ENCODE measurements at regions of chr14 and their contacts with region 1.

Region 1: GRCh38 chr14:104677512-104678332 is 11.7 kb upstream of the INF2 start:
- DNase-seq: peak; percentile 57
- H3K4me3 ChIP-seq: peak overlapping the region; percentile 52
- H3K27ac ChIP-seq: no peak overlapping the region
- H3K4me1 ChIP-seq: peaks cover 42% of the 10 kb centered on the region
- CTCF ChIP-seq: no peak

Region 2: DNA sequence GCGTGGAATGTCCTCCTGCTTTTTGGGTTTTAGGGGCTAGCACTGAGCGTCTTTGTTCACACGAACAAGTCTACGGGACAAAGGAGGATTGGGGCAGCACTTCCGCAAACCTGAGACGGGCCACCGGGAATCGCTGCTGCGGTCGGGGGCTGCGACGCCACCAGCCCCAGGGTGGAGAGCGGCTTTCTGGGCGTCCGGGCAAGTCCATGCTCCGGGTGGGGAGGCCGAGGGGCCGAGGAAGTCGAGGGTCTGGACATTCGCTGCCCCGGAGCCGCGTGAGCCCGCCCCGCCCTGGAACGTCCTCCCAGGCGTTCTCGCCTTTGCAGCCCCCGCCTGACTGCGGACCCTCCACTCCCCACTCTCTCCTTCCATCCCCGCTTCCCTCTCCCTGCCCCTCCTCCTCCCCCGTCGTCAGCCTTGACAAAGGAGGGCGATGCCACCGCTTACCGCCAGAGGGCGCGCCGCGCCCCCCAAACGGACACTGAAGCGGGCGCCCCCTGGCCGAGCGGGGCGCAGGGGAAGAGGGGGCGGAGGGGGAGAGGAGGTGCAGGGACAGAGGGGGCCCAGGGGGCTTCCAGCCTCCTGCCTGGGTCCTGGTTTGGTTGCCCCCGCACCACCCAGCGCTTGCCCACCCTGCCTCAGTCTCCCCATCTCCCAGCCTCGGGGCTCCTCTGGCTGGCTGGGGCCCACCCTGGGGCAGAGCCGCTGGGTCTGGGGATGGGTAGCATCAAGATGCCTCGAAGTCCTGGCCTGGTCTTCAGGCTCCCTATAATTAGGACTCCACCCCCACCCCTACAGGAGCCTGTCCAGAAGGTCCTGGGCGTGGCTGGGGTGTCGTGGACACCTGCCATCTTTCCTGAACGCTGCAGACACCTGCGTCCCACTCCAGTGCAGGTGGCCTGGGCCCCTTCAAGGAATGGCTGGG is 27.4 kb before region 1 on chr14:
- CTCF ChIA-PET with region 1: interaction called, 6 read pairs
- POLR2A ChIA-PET with region 1: interaction called, 11 read pairs
- intact Hi-C with region 1: loop called (anchors 1 kb)
- DNase-seq: peak; percentile 77
- H3K4me3 ChIP-seq: peak overlapping the region; percentile 65
- H3K27ac ChIP-seq: no peak overlapping the region
- H3K4me1 ChIP-seq: peaks cover 19% of the 10 kb centered on the region
- CTCF ChIP-seq: peak; percentile 94

Region 3: DNA sequence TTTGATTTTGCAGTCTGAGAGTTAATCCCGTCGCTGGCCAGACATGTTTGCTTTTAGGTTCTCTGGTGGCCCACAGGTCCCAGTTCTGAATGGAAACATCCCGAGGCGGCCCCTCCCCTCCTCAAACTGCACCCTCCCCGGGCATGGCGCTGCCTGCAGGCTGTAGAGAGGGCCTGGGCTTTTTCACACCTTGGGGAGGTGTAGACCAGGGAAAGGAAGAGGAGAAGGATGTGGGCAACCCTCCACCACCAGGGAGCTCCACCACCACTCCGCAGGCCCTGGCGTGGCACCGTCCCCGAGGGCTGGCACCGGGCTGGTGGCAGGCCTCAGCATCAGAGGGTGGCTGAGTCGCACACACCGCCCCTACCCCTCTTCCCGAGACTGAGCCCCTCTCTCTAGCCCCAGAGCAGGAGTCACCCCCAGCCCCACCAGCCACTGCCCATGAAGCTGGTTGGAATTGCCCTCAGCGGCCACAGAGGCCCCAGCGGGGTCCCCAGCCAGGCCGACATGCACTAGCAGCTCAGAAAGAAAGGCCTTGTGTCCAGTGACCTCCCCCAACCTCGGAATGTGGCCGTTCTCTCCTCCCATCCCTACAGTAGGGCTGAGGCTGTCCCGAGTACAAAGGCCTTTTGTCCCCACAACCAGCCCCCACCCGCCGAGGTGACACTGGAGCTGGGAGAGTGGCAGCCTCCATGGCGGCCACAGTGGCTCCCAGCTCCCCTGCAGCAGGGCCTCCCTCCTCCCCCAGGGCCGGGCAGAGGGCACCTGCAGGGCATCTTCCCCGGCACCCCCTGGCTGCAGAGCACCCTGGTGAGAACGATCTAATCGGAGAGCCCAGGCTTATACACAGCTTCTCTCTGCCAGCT is 11.8 kb before region 1 on chr14:
- CTCF ChIA-PET with region 1: interaction called, 13 read pairs
- POLR2A ChIA-PET with region 1: interaction called, 6 read pairs
- intact Hi-C with region 1: no loop called
- DNase-seq: peak; percentile 64
- H3K4me3 ChIP-seq: peak overlapping the region; percentile 28
- H3K27ac ChIP-seq: peak overlapping the region; percentile 47
- H3K4me1 ChIP-seq: peaks cover 46% of the 10 kb centered on the region
- CTCF ChIP-seq: peak; percentile 66; the same call in 1 of the 2 replicates

Region 4: DNA sequence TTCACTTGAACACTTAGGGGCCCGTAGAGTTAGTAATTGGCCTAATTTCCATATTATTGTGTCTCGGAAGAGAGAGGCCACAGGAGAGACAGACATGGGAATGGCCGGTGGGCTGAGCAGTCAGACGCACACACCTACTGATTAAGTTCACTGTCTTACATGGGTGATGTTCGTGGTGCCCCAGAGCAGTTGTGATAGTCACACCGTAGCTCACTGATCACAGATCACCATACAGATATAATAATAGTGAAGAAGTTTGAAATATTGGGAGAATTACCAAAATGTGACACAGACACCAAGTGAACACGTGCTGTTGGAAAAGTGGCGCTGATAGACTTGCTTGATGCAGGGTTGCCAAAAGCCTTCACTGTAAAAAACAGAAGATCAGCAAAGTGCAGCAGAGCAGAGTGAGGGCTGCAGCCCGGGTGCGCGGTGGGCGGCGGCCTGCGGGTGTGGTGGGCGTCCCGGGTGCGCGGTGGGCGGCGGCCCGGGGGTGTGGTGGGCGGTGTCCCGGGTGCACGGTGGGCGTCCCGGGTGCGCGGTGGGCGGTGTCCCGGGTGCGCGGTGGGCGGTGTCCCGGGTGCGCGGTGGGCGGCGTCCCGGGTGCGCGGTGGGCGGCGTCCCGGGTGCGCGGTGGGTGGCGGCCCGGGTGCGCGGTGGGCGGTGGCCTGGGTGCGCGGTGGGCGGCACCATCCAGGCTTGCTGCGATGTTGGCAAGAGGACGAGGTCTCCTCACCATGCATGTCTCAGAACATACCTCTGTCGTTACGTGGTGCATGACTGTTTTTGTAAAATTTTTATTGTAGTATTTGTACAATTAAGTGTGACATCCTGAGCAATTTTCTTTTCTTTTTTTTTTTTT is 686.4 kb after region 1 on chr14:
- CTCF ChIA-PET with region 1: no interaction called
- POLR2A ChIA-PET with region 1: no interaction called
- intact Hi-C with region 1: no loop called
- DNase-seq: no peak
- H3K4me3 ChIP-seq: no peak overlapping the region
- H3K27ac ChIP-seq: no peak overlapping the region
- H3K4me1 ChIP-seq: no peaks in the 10 kb centered on the region
- CTCF ChIP-seq: no peak